Caco-2 (cell line): ENCODE measurements at regions of chr2 and their contacts with region 1.

Region 1: GRCh38 chr2:168346725-168347477 is 99.5 kb upstream of the STK39 start:
- DNase-seq: peak; percentile 60 to 77
- H3K4me3 ChIP-seq: peak overlapping the region; percentile 38
- H3K4me3 Mint-ChIP-seq: peak overlapping the region; percentile 83
- H3K27ac Mint-ChIP-seq: peak overlapping the region; percentile 56
- H3K4me1 ChIP-seq: no peaks in the 10 kb centered on the region; the same call in 1 of the 2 replicates
- H3K4me1 Mint-ChIP-seq: peaks cover 10% of the 10 kb centered on the region
- H3K27me3 ChIP-seq: no peaks in the 10 kb centered on the region
- H3K27me3 Mint-ChIP-seq: no peaks in the 10 kb centered on the region
- CTCF ChIP-seq: peak; percentile 79 to 82

Region 2: DNA sequence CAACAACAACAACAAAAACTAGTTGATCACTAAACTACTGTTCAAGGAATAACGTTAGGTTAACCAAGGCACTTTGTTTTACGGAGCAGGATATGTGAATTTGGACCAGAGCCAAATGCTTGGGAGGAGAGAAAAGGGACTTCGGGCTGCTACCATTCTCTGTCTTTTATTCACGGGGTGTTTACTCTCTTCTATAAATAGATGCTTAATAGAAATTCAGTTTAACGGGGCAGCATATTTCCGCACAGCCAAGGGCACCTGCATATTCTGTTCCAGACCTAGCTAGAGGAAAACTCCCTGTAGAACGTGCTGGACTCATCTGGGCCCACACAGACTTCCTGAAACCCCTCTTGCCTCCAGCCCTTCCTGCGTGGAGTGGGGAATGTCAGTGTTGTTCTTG is 63.7 kb before region 1 on chr2:
- CTCF ChIA-PET with region 1: no interaction called
- POLR2A ChIA-PET with region 1: no interaction called
- intact Hi-C with region 1: no loop called
- DNase-seq: no peak
- H3K4me3 ChIP-seq: no peak overlapping the region
- H3K4me3 Mint-ChIP-seq: no peak overlapping the region
- H3K27ac Mint-ChIP-seq: no peak overlapping the region
- H3K4me1 ChIP-seq: no peaks in the 10 kb centered on the region
- H3K4me1 Mint-ChIP-seq: no peaks in the 10 kb centered on the region
- H3K27me3 ChIP-seq: no peaks in the 10 kb centered on the region
- H3K27me3 Mint-ChIP-seq: peaks cover 5% of the 10 kb centered on the region
- CTCF ChIP-seq: no peak

Region 3: DNA sequence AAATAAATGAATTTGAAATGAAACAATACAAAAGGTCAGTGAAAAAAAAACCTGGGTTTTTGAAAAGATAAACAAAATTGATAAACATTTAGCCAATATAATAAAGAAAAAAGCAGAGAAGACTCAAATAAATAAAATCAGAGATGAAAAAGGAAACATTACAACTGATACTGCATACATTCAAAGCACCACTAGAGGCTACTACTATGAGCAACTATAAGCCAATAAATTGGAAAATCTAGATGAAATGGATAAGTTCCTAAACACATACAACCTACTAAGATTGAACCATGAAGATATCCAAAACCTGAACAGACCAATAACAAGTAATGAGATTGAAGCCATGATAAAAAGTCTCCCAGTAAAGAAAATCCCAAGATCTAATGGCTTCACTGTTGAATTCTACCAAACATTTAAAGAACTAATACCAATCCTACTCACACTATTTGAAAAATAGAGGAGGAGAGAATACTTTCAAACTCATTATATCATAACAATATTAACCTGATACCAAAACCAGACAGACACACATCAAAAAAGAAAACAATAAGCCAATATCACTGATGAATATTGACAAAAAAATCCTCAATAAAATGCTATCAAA is 28.4 kb after region 1 on chr2:
- CTCF ChIA-PET with region 1: no interaction called
- POLR2A ChIA-PET with region 1: no interaction called
- intact Hi-C with region 1: no loop called
- DNase-seq: no peak
- H3K4me3 ChIP-seq: no peak overlapping the region
- H3K4me3 Mint-ChIP-seq: no peak overlapping the region
- H3K27ac Mint-ChIP-seq: no peak overlapping the region
- H3K4me1 ChIP-seq: no peaks in the 10 kb centered on the region
- H3K4me1 Mint-ChIP-seq: no peaks in the 10 kb centered on the region
- H3K27me3 ChIP-seq: no peaks in the 10 kb centered on the region
- H3K27me3 Mint-ChIP-seq: no peaks in the 10 kb centered on the region
- CTCF ChIP-seq: no peak

Region 4: DNA sequence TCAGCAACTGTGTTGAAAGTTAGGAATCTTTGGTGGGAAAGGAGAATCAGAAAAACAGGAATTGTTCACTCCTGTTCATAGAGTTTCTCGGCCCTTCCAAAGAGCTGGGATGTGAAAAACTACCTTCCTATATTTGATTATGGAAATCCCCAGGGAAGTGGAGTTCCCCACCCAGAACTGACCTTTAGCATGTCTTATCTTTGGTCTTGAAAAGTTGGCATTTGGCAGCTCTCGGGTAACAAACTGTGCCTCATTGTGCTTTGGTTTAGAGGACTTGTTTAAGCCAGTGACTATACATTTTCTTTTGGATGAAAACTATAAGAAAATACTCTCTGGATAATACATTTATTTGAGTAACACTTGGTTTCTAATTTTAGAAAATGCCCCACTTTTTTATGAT is 57.9 kb after region 1 on chr2:
- CTCF ChIA-PET with region 1: no interaction called
- POLR2A ChIA-PET with region 1: no interaction called
- intact Hi-C with region 1: loop called (anchors 5 kb)
- DNase-seq: no peak
- H3K4me3 ChIP-seq: no peak overlapping the region
- H3K4me3 Mint-ChIP-seq: peak overlapping the region; percentile 29
- H3K27ac Mint-ChIP-seq: no peak overlapping the region
- H3K4me1 ChIP-seq: peaks cover 12% of the 10 kb centered on the region
- H3K4me1 Mint-ChIP-seq: peaks cover 28% of the 10 kb centered on the region
- H3K27me3 ChIP-seq: no peaks in the 10 kb centered on the region
- H3K27me3 Mint-ChIP-seq: no peaks in the 10 kb centered on the region
- CTCF ChIP-seq: no peak

Region 5: GRCh38 chr2:168455648-168456520 is 109.0 kb after region 1 on chr2 and contains the start of gene CERS6:
- CTCF ChIA-PET with region 1: no interaction called
- POLR2A ChIA-PET with region 1: no interaction called
- intact Hi-C with region 1: loop called (anchors 5 kb)
- DNase-seq: peak; percentile 96
- H3K4me3 ChIP-seq: peak within 1 kb of the TSS; percentile 90
- H3K4me3 Mint-ChIP-seq: no peak within 1 kb of the TSS
- H3K27ac Mint-ChIP-seq: no peak within 1 kb of the TSS
- H3K4me1 ChIP-seq: no peaks in the 10 kb centered on the region
- H3K4me1 Mint-ChIP-seq: peaks cover 11% of the 10 kb centered on the region
- H3K27me3 ChIP-seq: no peaks in the 10 kb centered on the region
- H3K27me3 Mint-ChIP-seq: no peaks in the 10 kb centered on the region
- CTCF ChIP-seq: no peak
- total RNA-seq, gene CERS6: 32.7 and 35.5 TPM in 2 replicates

Region 6: GRCh38 chr2:168622559-168622958 is 275.7 kb after region 1 on chr2:
- CTCF ChIA-PET with region 1: no interaction called
- POLR2A ChIA-PET with region 1: no interaction called
- intact Hi-C with region 1: loop called (anchors 5 kb)
- DNase-seq: peak in 1 of 2 experiments; percentile 42
- H3K4me3 ChIP-seq: no peak overlapping the region
- H3K4me3 Mint-ChIP-seq: peak overlapping the region; percentile 30
- H3K27ac Mint-ChIP-seq: peak overlapping the region; percentile 72
- H3K4me1 ChIP-seq: peaks cover 26% of the 10 kb centered on the region
- H3K4me1 Mint-ChIP-seq: peaks cover 34% of the 10 kb centered on the region
- H3K27me3 ChIP-seq: no peaks in the 10 kb centered on the region
- H3K27me3 Mint-ChIP-seq: no peaks in the 10 kb centered on the region
- CTCF ChIP-seq: no peak

Region 7: GRCh38 chr2:168697668-168698121 is 350.8 kb after region 1 on chr2:
- CTCF ChIA-PET with region 1: interaction called, 8 read pairs
- POLR2A ChIA-PET with region 1: no interaction called
- intact Hi-C with region 1: loop called (anchors 2 kb)
- DNase-seq: peak; percentile 31 to 48
- H3K4me3 ChIP-seq: no peak overlapping the region
- H3K4me3 Mint-ChIP-seq: no peak overlapping the region
- H3K27ac Mint-ChIP-seq: no peak overlapping the region
- H3K4me1 ChIP-seq: no peaks in the 10 kb centered on the region
- H3K4me1 Mint-ChIP-seq: peaks cover 9% of the 10 kb centered on the region
- H3K27me3 ChIP-seq: no peaks in the 10 kb centered on the region
- H3K27me3 Mint-ChIP-seq: no peaks in the 10 kb centered on the region
- CTCF ChIP-seq: no peak

Region 8: DNA sequence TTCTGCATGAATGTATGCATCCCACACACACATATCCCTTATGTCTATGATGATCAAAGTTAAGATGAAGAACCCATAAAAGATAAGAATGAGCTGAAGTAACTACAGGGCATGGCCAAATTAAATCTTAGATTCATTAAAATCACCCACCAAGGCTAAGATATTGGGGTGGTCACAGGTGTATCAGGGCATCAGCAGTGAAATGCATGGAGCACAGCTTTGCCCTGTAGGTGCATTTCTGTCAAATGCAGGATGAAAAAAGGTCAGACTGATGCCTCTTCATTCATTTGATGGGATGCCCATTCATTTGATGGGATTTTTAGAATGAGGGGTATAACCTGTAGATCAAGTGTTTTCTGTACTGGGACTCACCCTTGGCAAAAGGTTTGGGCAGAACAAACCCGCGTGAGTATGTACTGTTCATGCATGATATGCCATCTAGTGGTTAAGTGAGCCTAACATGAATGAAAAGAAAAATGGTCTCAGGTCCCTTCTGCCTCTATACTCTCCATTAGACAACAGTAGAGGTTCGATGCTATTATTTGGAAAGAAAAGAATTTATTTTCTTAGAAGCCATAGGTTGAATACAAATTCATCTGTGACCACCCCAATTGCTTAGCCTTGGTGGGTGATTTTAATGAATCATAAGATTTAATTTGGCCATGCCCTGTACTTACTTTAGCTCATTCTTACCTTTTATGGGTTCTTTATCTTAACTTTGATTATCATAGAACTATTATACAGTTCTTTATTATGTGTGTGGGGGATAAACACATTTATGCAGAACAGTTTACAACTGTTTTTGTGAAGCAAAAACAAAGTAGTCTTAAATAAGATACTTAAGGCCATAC is 412.3 kb after region 1 on chr2:
- CTCF ChIA-PET with region 1: interaction called, 3 read pairs
- POLR2A ChIA-PET with region 1: no interaction called
- intact Hi-C with region 1: loop called (anchors 1 kb)
- DNase-seq: peak in 1 of 2 experiments; percentile 52
- H3K4me3 ChIP-seq: no peak overlapping the region
- H3K4me3 Mint-ChIP-seq: no peak overlapping the region
- H3K27ac Mint-ChIP-seq: no peak overlapping the region
- H3K4me1 ChIP-seq: no peaks in the 10 kb centered on the region
- H3K4me1 Mint-ChIP-seq: no peaks in the 10 kb centered on the region
- H3K27me3 ChIP-seq: no peaks in the 10 kb centered on the region
- H3K27me3 Mint-ChIP-seq: no peaks in the 10 kb centered on the region
- CTCF ChIP-seq: peak; percentile 52 to 60

Region 9: GRCh38 chr2:168816369-168816768 is 469.5 kb after region 1 on chr2:
- CTCF ChIA-PET with region 1: no interaction called
- POLR2A ChIA-PET with region 1: no interaction called
- intact Hi-C with region 1: no loop called
- DNase-seq: no peak
- H3K4me3 ChIP-seq: no peak overlapping the region
- H3K4me3 Mint-ChIP-seq: no peak overlapping the region
- H3K27ac Mint-ChIP-seq: peak overlapping the region; percentile 12
- H3K4me1 ChIP-seq: no peaks in the 10 kb centered on the region
- H3K4me1 Mint-ChIP-seq: peaks cover 7% of the 10 kb centered on the region
- H3K27me3 ChIP-seq: no peaks in the 10 kb centered on the region
- H3K27me3 Mint-ChIP-seq: no peaks in the 10 kb centered on the region
- CTCF ChIP-seq: no peak

Region 10: DNA sequence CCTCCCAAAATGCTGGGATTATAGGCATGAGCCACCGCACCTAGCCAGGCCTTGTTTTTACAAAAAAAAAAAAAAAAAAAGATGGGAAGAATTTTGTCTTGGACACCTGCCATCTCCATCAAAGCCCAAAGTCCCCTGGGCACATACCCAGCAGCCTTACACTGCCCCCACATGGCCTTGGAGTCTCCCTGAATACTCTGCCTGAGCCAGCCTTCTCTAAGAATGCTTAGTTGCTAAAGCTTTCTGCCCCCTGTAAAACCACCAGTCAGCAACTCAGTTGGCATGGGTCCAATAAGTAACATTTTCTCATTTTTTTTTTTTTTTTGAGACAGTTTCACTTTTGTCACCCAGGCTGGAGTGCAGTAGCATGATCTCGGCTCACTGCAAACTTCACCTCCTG is 502.7 kb after region 1 on chr2:
- CTCF ChIA-PET with region 1: no interaction called
- POLR2A ChIA-PET with region 1: no interaction called
- intact Hi-C with region 1: loop called (anchors 5 kb)
- DNase-seq: peak; percentile 43 to 44
- H3K4me3 ChIP-seq: no peak overlapping the region
- H3K4me3 Mint-ChIP-seq: no peak overlapping the region
- H3K27ac Mint-ChIP-seq: no peak overlapping the region
- H3K4me1 ChIP-seq: no peaks in the 10 kb centered on the region
- H3K4me1 Mint-ChIP-seq: no peaks in the 10 kb centered on the region
- H3K27me3 ChIP-seq: no peaks in the 10 kb centered on the region
- H3K27me3 Mint-ChIP-seq: no peaks in the 10 kb centered on the region
- CTCF ChIP-seq: peak in 1 of 2 experiments; percentile 42